Panc1 (cell line): ENCODE measurements at regions of chr11 and their contacts with region 1.

Region 1: DNA sequence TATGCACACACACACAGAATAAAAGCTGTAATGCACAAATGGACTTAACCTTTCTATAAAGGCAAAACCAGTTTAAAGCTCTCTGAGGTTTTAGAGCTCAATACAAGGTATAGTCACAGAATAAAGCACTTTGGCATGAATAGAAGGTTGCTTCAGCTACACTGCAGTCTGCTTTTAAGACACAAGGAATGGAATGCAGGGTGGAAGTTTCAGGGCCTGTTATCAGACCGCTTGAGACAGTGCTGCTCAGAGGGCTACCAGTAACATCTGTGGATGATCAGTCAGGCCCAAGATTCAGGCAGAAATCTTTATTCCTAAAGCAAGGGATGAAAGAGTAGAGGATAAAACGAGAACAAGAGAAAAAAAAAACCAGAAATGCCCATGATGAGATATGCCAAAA is 46.7 kb downstream of the CD44 start:
- DNase-seq: no peak
- ATAC-seq: no peak
- H3K4me3 ChIP-seq: no peak overlapping the region
- H3K27ac ChIP-seq: peak overlapping the region; percentile 92
- H3K4me1 ChIP-seq: peaks cover 93% of the 10 kb centered on the region
- H3K27me3 ChIP-seq: no peaks in the 10 kb centered on the region
- CTCF ChIP-seq: no peak

Region 2: GRCh38 chr11:35174666-35175065 is 11.0 kb before region 1 on chr11:
- CTCF ChIA-PET with region 1: no interaction called
- POLR2A ChIA-PET with region 1: interaction called, 15 read pairs
- in situ Hi-C with region 1: no loop called
- intact Hi-C with region 1: no loop called
- DNase-seq: no peak
- ATAC-seq: no peak
- H3K4me3 ChIP-seq: no peak overlapping the region
- H3K27ac ChIP-seq: peak overlapping the region; percentile 99
- H3K4me1 ChIP-seq: peaks cover 95% of the 10 kb centered on the region
- H3K27me3 ChIP-seq: no peaks in the 10 kb centered on the region
- CTCF ChIP-seq: no peak

Region 3: GRCh38 chr11:35207471-35208403 is 22.0 kb after region 1 on chr11:
- CTCF ChIA-PET with region 1: no interaction called
- POLR2A ChIA-PET with region 1: no interaction called
- in situ Hi-C with region 1: no loop called
- intact Hi-C with region 1: no loop called
- DNase-seq: no peak
- ATAC-seq: 0 out of 2 replicates have a peak, but pooled peaks have one; percentile 5
- H3K4me3 ChIP-seq: no peak overlapping the region
- H3K27ac ChIP-seq: peak overlapping the region; percentile 73
- H3K4me1 ChIP-seq: peaks cover 72% of the 10 kb centered on the region
- H3K27me3 ChIP-seq: no peaks in the 10 kb centered on the region
- CTCF ChIP-seq: no peak